GM18951 (cell line): ENCODE measurements at regions of chr14 and their contacts with region 1.

Region 1: GRCh38 chr14:75579279-75580230 is 1.1 kb downstream of the FLVCR2 start:
- POLR2A ChIP-seq: no peak

Region 2: GRCh38 chr14:75636100-75636692 is 56.6 kb after region 1 on chr14:
- in situ Hi-C with region 1: loop called (anchors 10 kb)
- POLR2A ChIP-seq: no peak